Activated CD4-positive, alpha-beta T cell treated with anti-CD3 and anti-CD28 coated beads, Interleukin-2, amount 10 ng/mL, durations not matched to agents 24 days and 14 days (primary cell): ENCODE measurements at regions of chr20 and their contacts with region 1.

Region 1: DNA sequence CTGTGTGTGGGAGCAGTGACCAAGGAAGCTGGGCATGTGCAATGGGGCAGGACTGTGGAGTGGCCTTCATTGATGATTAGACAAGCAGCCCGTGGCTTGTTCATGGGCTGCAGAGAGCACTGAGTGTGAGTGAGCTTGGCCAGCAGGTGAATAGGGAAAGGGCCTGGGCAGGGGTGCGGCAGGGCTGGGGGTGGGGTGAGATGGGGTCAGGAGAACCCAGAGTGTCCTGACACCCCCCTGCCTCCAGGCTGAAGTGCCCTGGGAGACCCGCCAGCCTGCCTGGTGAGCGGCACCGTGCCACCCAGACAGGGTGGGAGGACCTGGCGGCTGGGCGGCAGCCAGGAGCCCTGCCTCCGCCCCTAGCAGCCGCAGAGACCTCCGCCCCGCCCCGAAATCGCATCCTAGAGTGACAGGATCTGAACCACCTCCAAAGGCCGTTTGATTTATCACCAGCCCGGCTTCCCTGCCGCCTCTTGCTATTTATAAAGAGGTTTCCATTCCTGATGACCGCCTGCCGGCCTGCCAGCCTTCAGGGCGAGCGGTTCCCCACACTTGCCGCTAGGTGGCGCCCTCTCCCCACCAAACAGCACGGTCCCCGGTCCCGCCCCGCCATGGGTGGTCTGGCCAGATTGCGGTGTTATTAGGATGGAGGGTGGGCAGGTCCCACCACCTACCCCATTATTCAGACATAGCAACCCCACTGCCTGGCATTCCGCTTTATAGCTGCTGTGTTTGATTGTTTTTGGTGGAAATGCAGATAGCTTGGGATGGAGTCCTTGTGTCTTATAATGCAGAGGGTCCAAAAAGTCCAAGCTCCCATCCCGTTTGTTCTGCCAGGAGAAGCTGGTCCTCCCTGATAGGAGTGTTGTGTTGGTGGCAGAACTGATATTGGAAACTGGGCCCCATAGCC is 3.5 kb downstream of the MYLK2 start:
- DNase-seq: peak; percentile 92
- H3K4me3 Mint-ChIP-seq: peak overlapping the region; percentile 17
- H3K27ac Mint-ChIP-seq: no peak overlapping the region
- H3K4me1 Mint-ChIP-seq: peaks cover 9% of the 10 kb centered on the region
- H3K27me3 Mint-ChIP-seq: peaks cover 5% of the 10 kb centered on the region

Region 2: DNA sequence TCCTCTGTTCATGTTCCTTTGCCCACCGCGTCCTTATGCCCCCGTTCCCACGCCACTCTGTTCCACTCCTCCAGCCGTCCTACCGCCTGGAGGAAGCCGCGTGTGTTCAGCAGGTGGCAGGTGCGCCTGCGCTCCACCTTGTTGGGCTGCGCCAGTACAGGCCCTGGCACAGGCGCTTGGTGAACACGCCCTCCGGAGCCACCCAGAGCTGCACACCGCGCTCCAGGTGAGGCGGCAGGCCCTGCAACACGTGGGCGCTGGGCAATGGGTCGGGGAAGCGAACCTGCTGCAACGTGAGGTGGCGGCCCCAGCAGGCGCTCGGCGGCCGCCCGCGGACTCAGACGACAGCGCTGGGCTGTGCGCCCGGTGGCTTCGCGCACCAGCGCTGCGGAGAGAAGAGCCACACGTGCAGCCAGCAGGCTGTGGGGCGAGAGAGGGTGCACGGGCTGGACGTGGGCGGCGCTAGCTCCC is 26.8 kb after region 1 on chr20:
- intact Hi-C with region 1: loop called (anchors 1 kb)
- DNase-seq: no peak
- H3K4me3 Mint-ChIP-seq: no peak overlapping the region
- H3K27ac Mint-ChIP-seq: no peak overlapping the region
- H3K4me1 Mint-ChIP-seq: no peaks in the 10 kb centered on the region
- H3K27me3 Mint-ChIP-seq: peaks cover 12% of the 10 kb centered on the region

Region 3: DNA sequence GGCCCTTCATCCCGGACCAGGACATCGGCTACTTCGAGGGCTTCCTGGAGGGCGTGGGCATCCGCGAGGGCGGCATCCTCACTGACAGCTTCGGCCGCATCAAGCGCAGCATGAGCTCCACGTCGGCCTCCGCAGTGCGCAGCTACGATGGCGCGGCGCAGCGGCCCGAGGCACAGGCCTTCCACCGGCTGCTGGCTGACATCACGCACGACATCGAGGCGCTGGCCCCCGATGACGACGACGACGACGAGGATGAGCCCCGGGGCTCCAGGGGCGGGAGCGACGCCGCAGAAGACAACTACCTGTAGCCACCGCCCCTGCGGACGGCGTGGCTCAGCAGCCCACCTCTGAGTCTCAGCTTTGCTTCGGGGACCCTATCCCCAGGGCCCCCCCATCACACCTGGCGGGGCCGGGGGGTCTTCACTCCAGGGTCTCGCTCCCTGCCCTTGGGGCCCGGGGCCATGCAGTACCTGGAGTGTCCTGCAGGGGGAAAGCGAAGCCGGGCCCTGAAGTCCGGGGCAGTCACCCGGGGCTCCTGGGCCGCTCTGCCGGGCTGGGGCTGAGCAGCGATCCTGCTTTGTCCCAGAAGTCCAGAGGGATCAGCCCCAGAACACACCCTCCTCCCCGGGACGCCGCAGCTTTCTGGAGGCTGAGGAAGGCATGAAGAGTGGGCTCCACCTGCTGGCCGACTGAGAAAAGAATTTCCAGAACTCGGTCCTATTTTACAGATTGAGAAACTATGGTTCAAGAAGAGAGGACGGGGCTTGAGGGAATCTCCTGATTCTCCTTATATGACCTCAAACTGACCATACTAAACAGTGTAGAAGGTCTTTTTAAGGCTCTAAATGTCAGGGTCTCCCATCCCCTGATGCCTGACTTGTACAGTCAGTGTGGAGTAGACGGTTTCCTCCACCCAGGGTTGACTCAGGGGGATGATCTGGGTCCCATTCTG is 208.6 kb after region 1 on chr20:
- intact Hi-C with region 1: loop called (anchors 10 kb)
- DNase-seq: peak; percentile 84
- H3K4me3 Mint-ChIP-seq: peak overlapping the region; percentile 27
- H3K27ac Mint-ChIP-seq: no peak overlapping the region
- H3K4me1 Mint-ChIP-seq: no peaks in the 10 kb centered on the region
- H3K27me3 Mint-ChIP-seq: peaks cover 39% of the 10 kb centered on the region

Region 4: DNA sequence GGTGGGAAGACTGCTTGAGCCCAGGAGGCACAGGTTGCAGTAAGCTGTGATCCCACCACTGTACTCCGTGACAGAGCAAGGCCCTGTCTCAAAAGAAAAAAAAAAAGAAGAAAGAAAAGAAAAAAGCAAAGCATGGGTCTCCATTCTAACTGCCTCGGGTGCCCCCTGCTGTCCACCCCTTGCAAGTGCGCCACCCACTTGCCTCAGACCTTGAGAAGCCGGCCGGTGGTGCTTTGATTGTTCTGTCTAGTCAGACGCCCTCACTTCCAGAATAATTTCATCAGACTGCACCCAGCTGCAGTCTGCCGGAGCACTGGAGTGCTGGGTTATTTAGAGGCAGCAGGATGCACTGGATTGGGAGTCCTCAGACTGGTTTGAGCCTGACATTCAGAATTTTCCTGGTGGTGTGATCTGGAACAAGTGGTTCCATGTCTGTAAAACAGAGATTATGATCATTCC is 269.2 kb after region 1 on chr20:
- intact Hi-C with region 1: loop called (anchors 1 kb)
- DNase-seq: peak; percentile 93
- H3K4me3 Mint-ChIP-seq: no peak overlapping the region
- H3K27ac Mint-ChIP-seq: no peak overlapping the region
- H3K4me1 Mint-ChIP-seq: peaks cover 2% of the 10 kb centered on the region
- H3K27me3 Mint-ChIP-seq: peaks cover 18% of the 10 kb centered on the region